GM12878 (cell line): ENCODE measurements at regions of chr18 and their contacts with region 1.

Region 1: DNA sequence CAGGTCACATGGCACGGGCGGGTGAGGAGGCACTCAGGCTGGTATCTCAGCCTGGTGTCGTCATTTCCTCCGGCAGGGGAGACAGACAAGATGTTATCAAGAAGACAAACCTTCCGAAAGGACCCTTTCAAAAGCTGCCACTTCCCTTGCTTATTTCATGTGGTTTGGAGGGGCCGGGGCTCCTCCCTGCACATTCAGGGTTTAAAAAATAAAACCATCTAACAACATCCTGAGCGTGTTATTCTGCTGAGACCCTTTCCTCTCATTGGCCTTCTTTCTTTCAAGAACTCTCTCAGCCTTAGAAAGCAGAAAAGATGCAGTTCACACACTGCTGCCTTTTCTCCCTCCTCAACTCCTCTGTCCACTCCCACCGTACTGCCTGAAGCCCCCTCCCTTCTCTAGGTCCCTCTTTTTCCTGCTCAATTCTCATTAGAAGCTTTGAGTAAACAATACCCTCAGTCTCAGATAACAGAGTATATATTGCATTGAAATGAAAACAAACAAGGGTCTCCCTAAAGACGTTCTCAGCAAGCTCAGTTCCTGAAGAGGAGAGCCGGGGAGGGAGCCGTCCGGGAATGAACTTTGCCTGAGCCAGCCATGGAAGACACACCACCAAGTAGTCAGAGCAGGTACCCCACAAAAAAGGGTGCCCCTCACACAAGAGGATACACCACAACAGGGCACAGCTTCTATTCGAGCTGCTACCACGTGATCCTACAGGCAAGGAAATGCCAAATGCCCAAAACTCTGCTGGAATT is 9.7 kb downstream of the SMAD7 start:
- DNase-seq: peak; percentile 62
- ATAC-seq: peak; percentile 74
- H3K4me3 ChIP-seq: peak overlapping the region; percentile 35; the same call in 1 of the 2 replicates
- H3K27ac ChIP-seq: peak overlapping the region; percentile 63
- H3K4me1 ChIP-seq: peaks cover 41% of the 10 kb centered on the region
- H3K27me3 ChIP-seq: no peaks in the 10 kb centered on the region
- CTCF ChIP-seq: no peak
- EP300 ChIP-seq: no peak
- POLR2A ChIP-seq: no peak
- RAD21 ChIP-seq: no peak

Region 2: GRCh38 chr18:47779040-47779790 is 1161.8 kb before region 1 on chr18:
- CTCF ChIA-PET with region 1: no interaction called
- POLR2A ChIA-PET with region 1: no interaction called
- RAD21 ChIA-PET with region 1: no interaction called
- SMC1A ChIA-PET with region 1: no interaction called
- in situ Hi-C with region 1: no loop called
- intact Hi-C with region 1: no loop called
- DNase-seq: no peak
- ATAC-seq: no peak
- H3K4me3 ChIP-seq: no peak overlapping the region
- H3K27ac ChIP-seq: no peak overlapping the region
- H3K4me1 ChIP-seq: no peaks in the 10 kb centered on the region
- H3K27me3 ChIP-seq: no peaks in the 10 kb centered on the region
- CTCF ChIP-seq: no peak
- EP300 ChIP-seq: no peak
- POLR2A ChIP-seq: no peak
- RAD21 ChIP-seq: no peak

Region 3: DNA sequence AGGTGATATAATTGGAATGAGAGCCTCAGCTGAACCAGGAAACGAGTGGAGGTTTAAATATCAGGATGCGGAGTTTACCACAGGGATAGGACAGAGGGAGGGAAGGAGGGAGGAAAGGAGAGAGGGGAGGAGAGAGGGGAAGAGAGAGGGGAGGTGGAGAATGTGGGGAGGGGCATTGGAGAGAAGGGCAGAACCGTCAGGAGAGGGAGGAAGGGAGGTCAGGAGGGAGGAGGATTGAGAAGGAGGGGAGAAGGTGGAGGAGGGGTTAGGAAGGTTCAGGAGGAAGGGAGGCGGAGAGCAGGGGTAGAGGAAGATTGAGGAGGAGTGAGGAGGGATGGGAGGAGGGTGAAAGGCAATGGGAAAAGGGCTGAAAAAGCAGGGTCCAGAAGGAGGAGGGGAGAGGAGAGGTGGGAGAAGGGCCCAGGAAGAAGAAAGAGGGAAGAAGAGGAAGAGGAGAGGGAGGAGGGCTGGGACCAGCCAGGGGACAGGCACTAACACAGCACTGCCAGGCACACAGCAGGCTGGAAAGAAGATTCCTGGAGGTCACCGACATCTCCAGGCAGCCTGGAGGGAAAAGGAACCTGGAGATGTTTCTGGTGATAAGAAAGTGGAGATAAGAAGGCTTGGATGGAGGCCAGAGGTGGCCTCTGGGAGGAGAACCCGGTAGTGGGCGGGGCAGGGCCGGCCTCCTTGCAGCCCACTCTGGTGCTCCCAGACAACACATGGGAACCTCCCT is 833.9 kb before region 1 on chr18:
- CTCF ChIA-PET with region 1: no interaction called
- POLR2A ChIA-PET with region 1: no interaction called
- RAD21 ChIA-PET with region 1: no interaction called
- SMC1A ChIA-PET with region 1: no interaction called
- in situ Hi-C with region 1: no loop called
- intact Hi-C with region 1: no loop called
- DNase-seq: no peak
- ATAC-seq: no peak
- H3K4me3 ChIP-seq: no peak overlapping the region
- H3K27ac ChIP-seq: no peak overlapping the region
- H3K4me1 ChIP-seq: no peaks in the 10 kb centered on the region
- H3K27me3 ChIP-seq: peaks cover 2 to 6% of the 10 kb centered on the region in 2 experiments; a peak in 2 of 4 replicates
- CTCF ChIP-seq: no peak
- EP300 ChIP-seq: no peak
- POLR2A ChIP-seq: no peak
- RAD21 ChIP-seq: no peak

Region 4: GRCh38 chr18:48922801-48923730 is 18.0 kb before region 1 on chr18:
- CTCF ChIA-PET with region 1: interaction called, 4 read pairs
- POLR2A ChIA-PET with region 1: interaction called, 71 read pairs
- RAD21 ChIA-PET with region 1: interaction called, 3 read pairs
- SMC1A ChIA-PET with region 1: interaction called, 55 read pairs
- in situ Hi-C with region 1: no loop called
- intact Hi-C with region 1: no loop called
- DNase-seq: no peak
- ATAC-seq: no peak
- H3K4me3 ChIP-seq: peak overlapping the region; percentile 23; the same call in 1 of the 2 replicates
- H3K27ac ChIP-seq: peak overlapping the region; percentile 47
- H3K4me1 ChIP-seq: peaks cover 52% of the 10 kb centered on the region
- H3K27me3 ChIP-seq: no peaks in the 10 kb centered on the region
- CTCF ChIP-seq: no peak
- EP300 ChIP-seq: no peak
- POLR2A ChIP-seq: no peak
- RAD21 ChIP-seq: no peak